ENCODE measurements at regions of chr19 and their contacts with region 1.

Region 1: DNA sequence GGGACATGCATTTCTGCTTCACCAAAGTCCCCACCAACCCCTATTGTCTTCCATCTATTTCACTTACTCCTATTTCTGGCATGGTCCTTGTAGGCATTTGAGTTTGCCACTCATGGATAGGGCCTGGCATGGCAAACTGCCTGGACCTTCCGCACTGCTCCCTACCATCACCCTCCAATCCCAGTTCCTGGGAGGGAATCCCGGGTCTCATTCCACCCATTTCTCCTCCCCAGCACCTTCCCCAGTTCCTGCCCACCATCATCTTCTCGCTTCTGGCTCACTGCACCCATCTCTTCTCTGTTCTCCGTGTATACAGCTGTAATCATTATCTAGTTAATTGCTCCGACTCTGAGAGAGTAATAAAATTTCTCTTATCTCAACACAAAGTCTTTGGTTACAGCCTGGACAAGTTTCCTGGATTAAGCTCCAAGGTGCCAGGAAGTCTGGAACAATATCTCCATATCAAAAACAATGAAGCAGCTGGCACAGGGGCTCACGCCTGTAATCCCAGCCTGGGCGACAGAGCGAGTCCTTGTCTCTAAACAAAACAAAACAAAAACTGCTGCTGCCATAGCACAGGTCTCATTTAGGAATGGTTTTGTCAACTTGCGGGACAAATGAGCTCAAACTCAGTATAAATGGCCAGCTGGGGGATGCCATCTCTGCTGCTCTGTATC is 17.0 kb upstream of the COX7A1 start:
- DNase-seq: no peak
- H3K4me3 Mint-ChIP-seq: no peak overlapping the region
- H3K27ac Mint-ChIP-seq: no peak overlapping the region
- H3K4me1 Mint-ChIP-seq: no peaks in the 10 kb centered on the region
- H3K27me3 Mint-ChIP-seq: no peaks in the 10 kb centered on the region
- CTCF ChIP-seq: no peak

Region 2: DNA sequence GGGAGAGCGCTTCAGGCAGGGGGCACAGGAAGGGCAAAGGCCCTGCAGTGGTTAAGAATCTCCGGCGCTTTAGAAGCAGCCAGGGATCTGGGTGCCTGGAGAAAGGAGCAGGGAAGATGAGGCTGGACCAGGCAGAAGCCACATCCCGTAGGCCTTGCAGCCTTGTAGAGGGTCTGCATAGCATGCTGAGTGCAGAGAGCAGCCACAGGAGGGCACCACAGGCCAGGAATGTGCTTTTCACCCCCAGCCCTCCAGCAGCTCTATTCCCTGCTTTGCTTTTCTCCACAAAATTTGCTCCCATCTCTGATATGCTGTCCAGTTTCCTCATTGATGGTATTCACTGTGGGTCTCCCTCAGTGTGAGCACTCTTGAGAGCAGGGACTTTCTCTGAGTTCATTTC is 108.8 kb before region 1 on chr19:
- CTCF ChIA-PET with region 1: no interaction called
- intact Hi-C with region 1: loop called (anchors 5 kb)
- DNase-seq: peak; percentile 64
- H3K4me3 Mint-ChIP-seq: no peak overlapping the region
- H3K27ac Mint-ChIP-seq: no peak overlapping the region
- H3K4me1 Mint-ChIP-seq: peaks cover 26% of the 10 kb centered on the region
- H3K27me3 Mint-ChIP-seq: no peaks in the 10 kb centered on the region
- CTCF ChIP-seq: peak; percentile 56

Region 3: DNA sequence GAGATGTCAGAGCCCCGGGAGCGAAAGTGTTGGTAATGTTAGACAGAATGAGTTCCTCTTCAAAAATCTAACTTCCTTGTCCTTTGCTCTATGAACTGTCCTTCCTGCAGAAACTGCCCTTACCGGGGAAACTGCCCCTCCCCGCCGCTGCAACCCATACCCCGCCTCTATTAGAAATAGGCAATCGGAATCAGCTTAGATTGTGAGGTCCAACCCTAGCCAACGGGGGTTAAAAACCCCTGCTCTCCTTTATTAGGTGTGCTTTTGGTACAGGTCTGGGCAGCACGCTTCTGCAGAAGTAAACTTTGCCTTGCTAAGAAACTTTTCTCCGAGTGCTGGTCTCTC is 40.9 kb before region 1 on chr19:
- CTCF ChIA-PET with region 1: interaction called, 10 read pairs
- intact Hi-C with region 1: loop called (anchors 1 kb)
- DNase-seq: peak; percentile 38
- H3K4me3 Mint-ChIP-seq: peak overlapping the region; percentile 79
- H3K27ac Mint-ChIP-seq: peak overlapping the region; percentile 81
- H3K4me1 Mint-ChIP-seq: peaks cover 30% of the 10 kb centered on the region
- H3K27me3 Mint-ChIP-seq: no peaks in the 10 kb centered on the region
- CTCF ChIP-seq: no peak

Region 4: DNA sequence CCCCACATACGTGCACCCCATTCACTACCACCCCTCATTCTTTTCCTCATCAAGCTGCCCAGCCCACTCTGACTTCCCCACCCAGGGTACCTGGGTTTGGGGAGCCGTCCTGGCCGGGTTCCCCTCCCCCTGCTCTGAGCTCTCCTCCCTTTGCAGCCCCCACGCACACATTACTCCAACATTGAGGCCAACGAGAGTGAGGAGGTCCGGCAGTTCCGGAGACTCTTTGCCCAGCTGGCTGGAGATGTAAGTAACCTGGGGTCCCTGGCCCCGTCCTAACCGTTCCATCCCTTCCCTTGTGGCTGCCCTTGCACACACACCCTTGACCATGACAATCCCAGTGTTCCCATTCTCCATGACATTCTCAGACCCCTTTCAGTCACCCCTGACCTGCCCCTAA is 26.7 kb before region 1 on chr19:
- CTCF ChIA-PET with region 1: no interaction called
- intact Hi-C with region 1: no loop called
- DNase-seq: no peak
- H3K4me3 Mint-ChIP-seq: peak overlapping the region; percentile 95
- H3K27ac Mint-ChIP-seq: peak overlapping the region; percentile 61
- H3K4me1 Mint-ChIP-seq: peaks cover 12% of the 10 kb centered on the region
- H3K27me3 Mint-ChIP-seq: no peaks in the 10 kb centered on the region
- CTCF ChIP-seq: no peak

Measured in Calu3 (cell line).